Adrenal gland (tissue), 19 donors: ENCODE measurements at regions of chr11 and their contacts with region 1.

Region 1: GRCh38 chr11:100930185-100930778 is 199.3 kb downstream of the PGR start:
- DNase-seq: no peak
- H3K4me3 ChIP-seq: no peak overlapping the region
- H3K27ac ChIP-seq: no peak overlapping the region
- H3K4me1 ChIP-seq: peaks cover 0 to 6% of the 10 kb centered on the region in 2 donors
- H3K27me3 ChIP-seq: no peaks in the 10 kb centered on the region
- CTCF ChIP-seq: peak; percentile 50 to 72 (median 64)
- POLR2A ChIP-seq: no peak

Region 2: DNA sequence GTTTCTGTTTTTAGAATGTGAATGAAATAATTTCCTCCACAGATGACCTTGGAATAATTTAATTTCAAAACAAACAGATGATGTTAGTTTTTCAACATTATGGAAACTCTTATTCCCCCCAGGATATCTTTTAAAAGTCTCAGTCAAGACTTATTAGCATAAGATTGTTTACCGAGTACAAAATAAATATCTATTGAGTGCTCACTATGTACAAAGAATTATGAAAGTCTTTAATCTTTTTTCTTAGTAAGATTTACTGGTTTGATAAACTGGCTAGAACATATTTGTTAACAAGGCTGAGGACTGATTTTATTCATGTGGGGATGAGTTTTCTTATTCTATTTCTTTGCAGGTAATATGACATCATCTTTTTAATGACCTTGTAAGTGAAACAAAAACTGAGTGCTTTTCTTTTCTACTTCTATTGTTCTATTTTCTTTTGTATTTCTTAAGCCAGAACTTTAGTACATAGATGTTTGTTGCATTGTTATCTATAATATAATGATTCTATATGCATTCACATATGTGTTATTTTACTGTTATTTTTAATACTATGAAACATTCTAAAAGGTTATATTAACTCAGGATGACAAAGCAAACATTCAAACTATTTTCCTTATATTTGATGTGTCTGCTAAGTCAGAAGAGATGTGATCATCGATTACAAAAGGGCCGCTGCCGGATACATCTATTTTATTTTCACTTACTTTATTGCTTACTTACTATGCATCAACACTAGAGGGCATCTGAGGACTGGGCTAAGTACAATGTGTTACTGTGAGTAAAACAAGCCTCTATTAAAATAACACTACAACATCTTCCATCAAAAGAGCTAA is 354.2 kb before region 1 on chr11:
- intact Hi-C with region 1: loop called (anchors 10 kb)
- DNase-seq: peak in 6 of 7 donors; percentile 16 to 42 (median 23)
- H3K4me3 ChIP-seq: no peak overlapping the region
- H3K27ac ChIP-seq: no peak overlapping the region
- H3K4me1 ChIP-seq: no peaks in the 10 kb centered on the region
- H3K27me3 ChIP-seq: no peaks in the 10 kb centered on the region
- CTCF ChIP-seq: peak; percentile 59 to 86 (median 79)
- POLR2A ChIP-seq: no peak

Region 3: GRCh38 chr11:100581318-100581717 is 349.0 kb before region 1 on chr11:
- intact Hi-C with region 1: loop called (anchors 10 kb)
- DNase-seq: peak in 1 of 7 donors; percentile 20
- H3K4me3 ChIP-seq: no peak overlapping the region
- H3K27ac ChIP-seq: peak overlapping the region in 2 of 5 donors; percentile 3 to 48
- H3K4me1 ChIP-seq: peaks cover 0 to 9% of the 10 kb centered on the region in 2 donors
- H3K27me3 ChIP-seq: no peaks in the 10 kb centered on the region
- CTCF ChIP-seq: no peak
- POLR2A ChIP-seq: no peak

Region 4: DNA sequence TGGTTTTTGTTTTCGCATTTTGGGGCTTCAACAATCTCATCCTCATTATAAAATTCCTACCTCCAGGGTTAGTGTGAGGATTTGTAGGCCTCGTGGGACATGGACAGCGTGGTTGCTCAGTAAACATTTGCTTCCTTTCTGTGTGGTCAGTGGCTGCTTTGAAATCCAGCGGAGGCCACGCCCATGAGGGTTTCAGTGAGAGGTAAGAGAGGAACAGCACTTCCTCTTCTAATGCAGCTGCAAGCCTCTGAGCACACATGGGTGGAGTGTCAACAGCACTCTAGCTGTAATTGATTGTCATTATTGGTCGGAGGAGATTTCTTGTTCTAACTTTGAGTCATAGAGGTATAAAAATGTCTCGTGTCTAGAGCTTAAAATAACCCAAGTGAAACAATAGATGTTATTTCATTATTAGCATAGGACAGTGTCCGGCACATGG is 249.2 kb before region 1 on chr11:
- intact Hi-C with region 1: loop called in 1 of 2 experiments (anchors 5 kb)
- DNase-seq: peak in 6 of 7 donors; percentile 29 to 76 (median 38)
- H3K4me3 ChIP-seq: no peak overlapping the region
- H3K27ac ChIP-seq: no peak overlapping the region
- H3K4me1 ChIP-seq: no peaks in the 10 kb centered on the region
- H3K27me3 ChIP-seq: no peaks in the 10 kb centered on the region
- CTCF ChIP-seq: no peak
- POLR2A ChIP-seq: no peak